ENCODE measurements at regions of chr2 and their contacts with region 1.

Region 1: DNA sequence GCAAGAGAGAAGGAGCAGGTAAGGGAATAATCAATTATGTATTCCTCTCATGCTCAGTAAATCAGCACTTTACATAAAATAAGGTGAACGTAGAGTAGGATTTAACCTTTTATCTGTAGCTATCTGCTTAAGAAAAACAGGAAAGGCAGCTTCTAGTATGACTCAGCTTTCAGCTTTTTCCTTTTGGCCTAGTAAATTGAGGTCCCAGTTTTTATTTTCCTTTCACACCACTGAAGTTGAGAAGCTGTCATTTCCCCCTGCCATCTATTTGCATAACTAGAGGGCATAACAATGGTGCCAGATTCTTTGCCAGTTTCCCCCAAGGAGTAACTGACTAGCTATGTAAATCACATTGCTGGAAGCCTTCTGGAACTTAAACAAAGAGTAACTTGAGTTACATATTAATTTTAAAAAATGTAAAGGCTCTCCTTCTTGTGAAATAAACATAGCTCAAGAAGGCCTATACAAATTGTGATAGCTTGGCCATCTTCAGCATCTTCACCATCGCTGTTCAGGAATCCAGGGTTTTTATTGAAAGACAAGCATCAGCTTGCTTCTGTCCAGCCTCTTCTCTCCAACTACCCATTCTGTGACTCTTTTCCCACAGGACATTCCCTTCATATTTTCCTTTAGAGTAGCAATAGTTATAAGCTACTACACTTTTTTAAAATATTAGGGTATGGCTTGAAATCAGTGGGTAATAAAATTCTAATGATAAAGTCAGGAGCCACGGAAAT is 97.0 kb downstream of the KYNU start:
- DNase-seq: no peak
- H3K4me3 ChIP-seq: no peak overlapping the region
- H3K27ac ChIP-seq: no peak overlapping the region
- H3K4me1 ChIP-seq: no peaks in the 10 kb centered on the region
- H3K27me3 ChIP-seq: no peaks in the 10 kb centered on the region
- CTCF ChIP-seq: no peak
- POLR2A ChIP-seq: no peak

Region 2: DNA sequence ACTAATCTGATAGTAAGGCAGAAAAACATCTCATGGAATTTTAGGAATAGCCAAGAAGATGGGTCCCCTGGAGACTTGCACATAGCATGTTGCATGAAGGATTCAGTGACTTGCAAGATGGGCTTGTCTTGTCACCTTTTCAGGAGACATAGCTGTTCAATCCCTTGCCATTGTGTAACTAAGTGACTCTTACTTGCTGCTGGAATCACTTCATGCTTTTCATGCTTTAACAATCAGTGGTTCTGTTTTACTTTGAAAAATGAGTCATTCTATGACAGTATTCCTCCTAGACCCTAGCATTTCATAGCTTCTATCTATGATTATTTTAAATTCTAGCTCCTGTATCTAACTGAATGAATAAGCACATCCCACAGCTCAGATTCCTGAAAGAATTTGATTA is 94.2 kb before region 1 on chr2:
- intact Hi-C with region 1: loop called in 1 of 2 experiments (anchors 10 kb)
- DNase-seq: no peak
- H3K4me3 ChIP-seq: no peak overlapping the region
- H3K27ac ChIP-seq: no peak overlapping the region
- H3K4me1 ChIP-seq: no peaks in the 10 kb centered on the region
- H3K27me3 ChIP-seq: no peaks in the 10 kb centered on the region
- CTCF ChIP-seq: no peak
- POLR2A ChIP-seq: no peak

Measured in adrenal gland (tissue), 19 donors.